ENCODE measurements at regions of chr19 and their contacts with region 1.

Region 1: DNA sequence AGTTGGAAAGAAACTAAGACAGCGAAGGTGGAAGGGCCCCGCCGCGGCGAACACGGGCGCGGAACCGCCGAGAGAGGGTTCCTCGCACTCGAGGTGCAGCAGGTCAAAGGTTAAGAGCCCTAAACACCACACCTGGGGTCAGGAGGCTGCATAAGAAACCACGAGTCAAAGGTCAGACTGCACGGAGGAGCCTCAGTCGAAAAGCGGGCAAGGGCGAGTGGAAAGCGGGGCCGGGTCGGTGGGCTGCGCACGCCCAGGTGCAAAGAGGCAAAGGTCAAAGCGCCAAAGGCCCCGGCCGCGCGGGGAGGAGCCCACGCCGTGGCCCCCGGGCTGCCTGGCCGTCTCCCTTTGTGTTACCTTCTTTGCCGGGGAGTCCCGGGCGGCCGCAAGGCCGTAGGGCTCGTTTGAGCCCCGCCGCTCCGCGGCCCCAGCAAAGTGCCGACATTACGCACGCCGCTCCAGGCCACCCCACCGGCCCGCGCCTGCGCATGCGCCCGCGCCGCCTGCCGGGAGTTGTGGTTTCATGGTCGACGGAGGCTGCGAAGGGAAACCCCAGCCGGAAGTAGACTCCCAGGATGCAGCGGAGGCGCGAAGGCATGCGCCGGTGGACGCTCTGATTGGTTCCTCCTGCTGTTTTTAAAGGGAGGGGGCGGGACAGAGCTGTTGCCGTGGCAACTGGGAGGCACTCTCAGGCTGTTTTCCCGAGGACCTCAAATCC is at the start of gene POLRMT:
- DNase-seq: peak; percentile 99
- H3K4me3 ChIP-seq: peak within 1 kb of the TSS; percentile 93
- H3K27ac ChIP-seq: peak within 1 kb of the TSS; percentile 50
- H3K4me1 ChIP-seq: peaks cover 9% of the 10 kb centered on the region
- CTCF ChIP-seq: no peak
- total RNA-seq, gene POLRMT: 50.0 and 65.5 TPM in 2 replicates

Region 2: GRCh38 chr19:532561-533363 is 100.5 kb before region 1 on chr19:
- CTCF ChIA-PET with region 1: no interaction called
- POLR2A ChIA-PET with region 1: no interaction called
- intact Hi-C with region 1: no loop called
- DNase-seq: peak; percentile 57
- H3K4me3 ChIP-seq: peak overlapping the region; percentile 96
- H3K27ac ChIP-seq: no peak overlapping the region
- H3K4me1 ChIP-seq: peaks cover 17% of the 10 kb centered on the region
- CTCF ChIP-seq: peak; percentile 72

Region 3: GRCh38 chr19:604355-604754 is 28.9 kb before region 1 on chr19:
- CTCF ChIA-PET with region 1: no interaction called
- POLR2A ChIA-PET with region 1: no interaction called
- intact Hi-C with region 1: loop called (anchors 2 kb)
- DNase-seq: peak; percentile 89
- H3K4me3 ChIP-seq: no peak overlapping the region
- H3K27ac ChIP-seq: no peak overlapping the region
- H3K4me1 ChIP-seq: peaks cover 5% of the 10 kb centered on the region
- CTCF ChIP-seq: no peak